Gastrocnemius medialis (tissue), 4 donors: ENCODE measurements at regions of chr15 and their contacts with region 1.

Region 1: DNA sequence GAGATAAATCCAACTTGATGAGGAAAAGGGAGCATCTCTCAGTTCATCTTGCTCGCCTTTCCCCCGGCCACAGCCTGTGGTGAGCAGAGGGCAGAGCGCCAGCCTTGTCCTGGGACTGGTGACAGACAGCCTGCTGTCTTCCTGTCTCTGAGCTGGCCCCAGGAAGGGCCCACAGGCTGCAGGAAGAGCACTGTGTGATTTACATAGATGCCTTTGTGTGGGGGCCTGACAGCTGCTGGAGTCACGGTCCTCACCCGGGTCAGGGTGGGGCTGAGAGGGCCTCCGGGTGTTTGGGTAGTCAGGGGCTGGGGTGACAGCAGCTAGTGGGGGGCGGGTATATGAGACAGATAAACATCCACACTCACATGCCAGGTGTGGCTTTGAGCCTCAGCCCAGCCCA is 29.3 kb downstream of the PLA2G4D start:
- DNase-seq: no peak
- ATAC-seq: no peak
- H3K4me3 ChIP-seq: no peak overlapping the region
- H3K27ac ChIP-seq: no peak overlapping the region
- H3K4me1 ChIP-seq: peaks cover 0 to 2% of the 10 kb centered on the region in 2 donors
- H3K27me3 ChIP-seq: no peaks in the 10 kb centered on the region
- CTCF ChIP-seq: no peak
- POLR2A ChIP-seq: no peak

Region 2: GRCh38 chr15:41746802-41747201 is 318.2 kb before region 1 on chr15:
- in situ Hi-C with region 1: no loop called
- intact Hi-C with region 1: no loop called
- DNase-seq: no peak
- ATAC-seq: no peak
- H3K4me3 ChIP-seq: no peak overlapping the region
- H3K27ac ChIP-seq: no peak overlapping the region
- H3K4me1 ChIP-seq: no peaks in the 10 kb centered on the region
- H3K27me3 ChIP-seq: no peaks in the 10 kb centered on the region
- CTCF ChIP-seq: no peak
- POLR2A ChIP-seq: no peak

Region 3: GRCh38 chr15:41795996-41796856 is 268.8 kb before region 1 on chr15:
- in situ Hi-C with region 1: no loop called
- intact Hi-C with region 1: no loop called
- DNase-seq: no peak
- ATAC-seq: no peak
- H3K4me3 ChIP-seq: no peak overlapping the region
- H3K27ac ChIP-seq: peak overlapping the region in 1 of 4 donors; percentile 23
- H3K4me1 ChIP-seq: peaks cover 23 to 24% of the 10 kb centered on the region in 2 donors
- H3K27me3 ChIP-seq: no peaks in the 10 kb centered on the region
- CTCF ChIP-seq: no peak
- POLR2A ChIP-seq: no peak

Region 4: GRCh38 chr15:42133886-42134502 is 69.0 kb after region 1 on chr15:
- in situ Hi-C with region 1: no loop called
- intact Hi-C with region 1: loop called (anchors 2 kb)
- DNase-seq: no peak
- ATAC-seq: peak in 1 of 2 donors; percentile 52
- H3K4me3 ChIP-seq: no peak overlapping the region
- H3K27ac ChIP-seq: no peak overlapping the region
- H3K4me1 ChIP-seq: no peaks in the 10 kb centered on the region
- H3K27me3 ChIP-seq: no peaks in the 10 kb centered on the region
- CTCF ChIP-seq: peak in 3 of 5 experiments; percentile 51 to 68 (median 57)
- POLR2A ChIP-seq: no peak